Heart left ventricle (tissue), 16 donors: ENCODE measurements at regions of chr20 and their contacts with region 1.

Region 1: DNA sequence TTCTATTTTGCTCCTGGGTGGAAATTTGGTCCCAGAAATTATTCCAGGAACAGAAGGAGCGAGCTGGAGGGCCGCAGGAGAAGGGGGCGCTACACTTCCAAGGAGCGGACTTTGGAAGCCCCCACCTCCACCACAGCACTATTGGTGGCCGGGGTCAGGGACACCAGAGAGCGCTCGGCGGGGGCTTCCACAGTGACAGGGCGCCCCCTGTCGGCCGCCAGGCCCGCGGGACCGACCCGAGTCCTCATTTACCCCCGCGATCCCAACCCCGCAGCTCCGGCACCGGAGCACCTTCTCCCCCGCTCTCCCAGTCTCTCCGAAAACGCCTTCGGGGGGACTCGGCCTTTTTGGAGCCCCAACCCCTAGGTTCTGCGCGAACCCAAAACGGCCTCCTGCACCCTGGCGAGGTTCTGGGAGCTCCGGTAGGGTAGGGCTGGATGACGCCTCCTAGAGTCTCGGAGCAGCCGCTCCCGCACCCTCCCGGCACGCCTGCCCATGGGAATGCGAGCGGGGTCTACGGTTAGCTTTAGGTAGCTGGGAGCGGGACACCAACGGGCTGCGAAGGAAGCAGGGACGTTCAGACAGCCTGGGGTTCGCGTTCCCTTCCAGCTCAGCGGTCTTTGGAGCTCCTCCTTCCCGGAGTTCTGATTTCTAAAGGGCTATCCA is 2.4 kb upstream of the FOXA2 start:
- DNase-seq: no peak
- ATAC-seq: no peak
- H3K4me3 ChIP-seq: no peak overlapping the region
- H3K27ac ChIP-seq: no peak overlapping the region
- H3K4me1 ChIP-seq: peaks cover 0 to 44% (median 5%) of the 10 kb centered on the region in 12 donors
- H3K27me3 ChIP-seq: peaks cover 58 to 98% (median 79%) of the 10 kb centered on the region in 9 donors
- CTCF ChIP-seq: peak in 9 of 12 donors; percentile 2 to 44 (median 31)
- POLR2A ChIP-seq: no peak

Region 2: DNA sequence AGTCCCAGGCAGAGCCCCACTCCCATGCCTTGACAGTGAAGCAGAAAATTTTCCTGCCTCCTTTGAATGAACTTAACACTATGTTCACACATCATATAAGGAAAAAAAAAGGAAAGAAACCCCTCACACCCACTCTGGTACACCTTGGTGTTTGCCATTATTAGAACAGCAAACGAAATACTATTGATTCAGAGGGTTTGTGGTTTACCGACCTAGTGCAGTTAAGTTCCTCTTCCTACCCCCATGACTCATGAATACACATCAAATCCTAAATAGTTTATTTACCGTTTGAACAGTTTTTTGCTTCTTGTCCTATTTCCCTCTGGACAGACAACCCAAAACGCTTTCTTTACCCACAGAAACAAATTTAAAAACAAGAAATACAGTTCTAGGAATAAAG is 240.1 kb before region 1 on chr20:
- intact Hi-C with region 1: loop called in 1 of 10 experiments (anchors 10 kb)
- DNase-seq: no peak
- ATAC-seq: no peak
- H3K4me3 ChIP-seq: no peak overlapping the region
- H3K27ac ChIP-seq: no peak overlapping the region
- H3K4me1 ChIP-seq: no peaks in the 10 kb centered on the region
- H3K27me3 ChIP-seq: peaks cover 0 to 55% (median 6%) of the 10 kb centered on the region in 9 donors
- CTCF ChIP-seq: no peak
- POLR2A ChIP-seq: no peak